Activated CD4-positive, alpha-beta T cell treated with anti-CD3 and anti-CD28 coated beads, Interleukin-2, amount 10 ng/mL, durations not matched to agents 24 days and 14 days (primary cell): ENCODE measurements at regions of chr6 and their contacts with region 1.

Region 1: GRCh38 chr6:37257634-37258404 is at the starts of genes TBC1D22B and TMEM217:
- DNase-seq: peak; percentile 99
- H3K4me3 Mint-ChIP-seq: peak within 1 kb of the TSS; percentile 88
- H3K27ac Mint-ChIP-seq: peak within 1 kb of the TSS; percentile 95
- H3K4me1 Mint-ChIP-seq: peaks cover 42% of the 10 kb centered on the region
- H3K27me3 Mint-ChIP-seq: no peaks in the 10 kb centered on the region
- total RNA-seq, gene TBC1D22B: 17.2 and 18.7 TPM in 2 replicates
- total RNA-seq, gene TMEM217: 4.1 and 6.1 TPM in 2 replicates

Region 2: GRCh38 chr6:37051138-37052026 is 206.4 kb before region 1 on chr6:
- intact Hi-C with region 1: loop called (anchors 1 kb)
- DNase-seq: peak; percentile 96
- H3K4me3 Mint-ChIP-seq: peak overlapping the region; percentile 88
- H3K27ac Mint-ChIP-seq: peak overlapping the region; percentile 98
- H3K4me1 Mint-ChIP-seq: peaks cover 57% of the 10 kb centered on the region
- H3K27me3 Mint-ChIP-seq: no peaks in the 10 kb centered on the region

Region 3: DNA sequence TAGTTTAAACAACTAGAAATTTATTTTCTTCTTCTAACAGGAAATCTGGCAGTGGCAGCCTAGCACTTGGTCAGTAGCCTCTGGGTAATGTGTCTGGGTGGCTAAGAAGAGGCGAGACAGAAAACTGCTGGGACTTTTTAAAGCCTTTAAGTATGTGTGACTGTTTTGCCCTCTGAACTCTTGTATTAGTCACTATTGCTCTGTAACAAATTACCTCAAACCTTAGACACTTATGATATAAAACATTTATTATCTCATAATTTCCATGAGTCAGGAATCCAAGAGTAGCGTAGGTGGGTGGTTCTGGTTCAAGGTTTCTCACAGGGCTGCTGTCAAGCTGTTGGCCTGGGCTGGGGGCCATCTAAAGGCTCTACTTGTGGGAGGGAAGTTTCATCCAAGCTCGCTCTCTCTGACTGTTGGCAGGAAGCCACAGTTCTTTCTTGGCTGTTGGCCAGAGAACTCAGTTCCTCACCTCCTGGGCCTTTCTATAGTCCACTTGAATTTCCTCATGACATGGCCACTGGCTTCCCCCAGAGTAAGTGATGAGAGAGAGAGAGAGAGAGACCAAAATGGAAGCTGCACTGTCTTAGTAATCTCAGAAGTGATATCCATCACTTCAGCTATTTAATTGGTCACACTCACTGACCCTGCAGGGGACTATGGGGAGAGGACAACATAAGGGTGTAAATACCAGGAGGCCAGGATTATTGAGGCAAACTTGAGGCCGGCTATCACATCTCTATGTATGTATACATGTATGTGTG is 17.7 kb before region 1 on chr6:
- intact Hi-C with region 1: loop called (anchors 1 kb)
- DNase-seq: peak; percentile 82
- H3K4me3 Mint-ChIP-seq: peak overlapping the region; percentile 49
- H3K27ac Mint-ChIP-seq: peak overlapping the region; percentile 96
- H3K4me1 Mint-ChIP-seq: peaks cover 38% of the 10 kb centered on the region
- H3K27me3 Mint-ChIP-seq: no peaks in the 10 kb centered on the region

Region 4: DNA sequence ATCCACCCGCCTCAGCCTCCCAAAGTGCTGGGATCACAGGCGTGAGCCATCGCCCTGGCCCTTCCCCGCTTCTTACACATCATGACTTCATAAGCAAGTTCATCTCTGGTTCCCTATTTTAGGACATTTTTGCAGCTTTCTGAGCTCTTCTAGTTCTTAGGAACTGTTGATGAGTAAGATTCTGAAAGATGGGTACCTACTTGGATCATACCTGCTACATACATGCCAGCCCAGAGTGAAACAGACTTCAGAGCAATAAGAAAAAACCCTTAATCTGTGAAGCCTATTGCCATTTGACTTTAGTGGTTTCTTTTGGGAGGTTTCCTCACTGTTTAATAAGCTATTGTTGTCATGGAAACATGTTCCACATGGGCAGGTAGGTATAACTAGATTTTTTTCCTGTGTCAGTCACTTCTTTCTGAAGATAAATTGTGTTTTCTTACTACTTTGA is 28.1 kb after region 1 on chr6:
- intact Hi-C with region 1: loop called (anchors 1 kb)
- DNase-seq: no peak
- H3K4me3 Mint-ChIP-seq: no peak overlapping the region
- H3K27ac Mint-ChIP-seq: peak overlapping the region; percentile 68
- H3K4me1 Mint-ChIP-seq: peaks cover 48% of the 10 kb centered on the region
- H3K27me3 Mint-ChIP-seq: no peaks in the 10 kb centered on the region